ENCODE measurements at regions of chr11 and their contacts with region 1.

Region 1: DNA sequence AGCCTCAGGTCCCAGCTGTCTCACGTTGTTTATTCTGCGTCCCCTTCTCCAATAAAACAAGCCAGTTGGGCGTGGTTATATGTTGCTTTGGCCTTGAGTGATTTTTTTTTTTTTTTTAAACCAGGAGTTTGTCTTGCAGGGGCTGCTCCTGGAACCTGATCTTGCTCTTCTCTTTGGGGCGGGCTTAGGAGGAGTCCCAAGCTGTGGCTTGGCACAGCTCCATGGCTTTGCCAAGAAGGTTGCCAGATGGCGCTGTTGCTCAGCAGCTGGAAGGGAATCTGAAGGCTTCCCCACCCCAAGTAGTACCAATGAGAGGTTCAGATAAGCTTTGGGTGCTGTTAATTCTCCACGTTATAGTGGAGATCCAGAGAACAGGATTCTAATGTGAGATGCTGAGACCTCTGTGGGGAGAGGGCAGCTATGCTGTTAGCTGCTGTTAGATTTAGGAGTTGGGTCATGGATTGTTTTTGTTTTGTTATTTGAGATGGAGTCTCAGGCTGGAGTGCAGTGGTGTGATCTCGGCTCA is 2.0 kb upstream of the FERMT3 start:
- DNase-seq: peak; percentile 98
- ATAC-seq: peak; percentile 73
- H3K4me3 ChIP-seq: no peak overlapping the region
- H3K27ac ChIP-seq: no peak overlapping the region
- H3K4me1 ChIP-seq: 0 out of 2 replicates have a peak, but pooled peaks cover 3% of the 10 kb centered on the region
- H3K27me3 ChIP-seq: no peaks in the 10 kb centered on the region
- CTCF ChIP-seq: peak; percentile 96

Region 2: DNA sequence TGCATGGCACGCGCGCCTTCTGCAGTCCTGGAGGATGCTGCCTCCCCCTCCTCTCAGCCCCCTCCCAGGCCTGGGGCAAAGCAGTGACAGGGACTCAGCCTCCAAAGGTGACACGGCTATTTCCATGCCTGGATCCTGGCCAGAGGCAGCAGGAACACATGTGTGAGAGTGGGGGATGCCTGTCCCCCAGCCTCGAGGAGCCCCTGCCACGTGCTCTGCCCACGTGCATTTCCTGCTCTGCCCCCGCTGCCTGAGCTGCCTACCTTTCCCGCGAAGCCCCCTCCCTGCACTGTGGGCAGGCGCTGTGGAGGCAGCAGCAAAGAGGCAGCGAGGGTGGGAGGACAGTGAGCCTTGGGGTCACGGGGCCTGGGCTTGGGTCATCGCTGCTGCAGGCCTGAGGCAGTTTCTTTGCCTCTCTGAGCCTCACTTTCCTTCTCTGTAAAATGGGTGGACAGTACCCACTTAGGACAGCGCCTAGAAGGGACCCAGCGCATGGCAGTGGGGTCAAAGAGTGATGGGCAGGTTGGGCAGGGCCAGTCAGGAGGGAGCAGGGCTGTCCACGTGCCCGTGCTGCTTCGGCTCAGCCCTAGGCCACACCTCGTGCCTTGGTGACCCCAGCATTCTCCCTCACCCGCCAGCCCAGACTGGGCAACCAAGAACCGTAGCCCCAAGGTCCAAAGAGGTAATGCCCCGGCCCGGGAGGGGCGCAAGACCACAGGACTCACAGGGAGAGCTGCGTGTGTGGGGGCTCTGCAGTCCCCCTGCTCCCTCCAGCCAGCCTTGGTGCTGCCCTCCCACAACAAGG is 120.2 kb before region 1 on chr11:
- CTCF ChIA-PET with region 1: no interaction called
- POLR2A ChIA-PET with region 1: interaction called, 10 read pairs
- intact Hi-C with region 1: no loop called
- DNase-seq: no peak
- ATAC-seq: no peak
- H3K4me3 ChIP-seq: no peak overlapping the region
- H3K27ac ChIP-seq: no peak overlapping the region
- H3K4me1 ChIP-seq: no peaks in the 10 kb centered on the region
- H3K27me3 ChIP-seq: no peaks in the 10 kb centered on the region
- CTCF ChIP-seq: no peak

Region 3: GRCh38 chr11:64170419-64170818 is 34.1 kb before region 1 on chr11:
- CTCF ChIA-PET with region 1: no interaction called
- POLR2A ChIA-PET with region 1: no interaction called
- intact Hi-C with region 1: no loop called
- DNase-seq: no peak
- ATAC-seq: no peak
- H3K4me3 ChIP-seq: no peak overlapping the region
- H3K27ac ChIP-seq: no peak overlapping the region
- H3K4me1 ChIP-seq: 0 out of 2 replicates have a peak, but pooled peaks cover 4% of the 10 kb centered on the region
- H3K27me3 ChIP-seq: no peaks in the 10 kb centered on the region
- CTCF ChIP-seq: no peak

Region 4: DNA sequence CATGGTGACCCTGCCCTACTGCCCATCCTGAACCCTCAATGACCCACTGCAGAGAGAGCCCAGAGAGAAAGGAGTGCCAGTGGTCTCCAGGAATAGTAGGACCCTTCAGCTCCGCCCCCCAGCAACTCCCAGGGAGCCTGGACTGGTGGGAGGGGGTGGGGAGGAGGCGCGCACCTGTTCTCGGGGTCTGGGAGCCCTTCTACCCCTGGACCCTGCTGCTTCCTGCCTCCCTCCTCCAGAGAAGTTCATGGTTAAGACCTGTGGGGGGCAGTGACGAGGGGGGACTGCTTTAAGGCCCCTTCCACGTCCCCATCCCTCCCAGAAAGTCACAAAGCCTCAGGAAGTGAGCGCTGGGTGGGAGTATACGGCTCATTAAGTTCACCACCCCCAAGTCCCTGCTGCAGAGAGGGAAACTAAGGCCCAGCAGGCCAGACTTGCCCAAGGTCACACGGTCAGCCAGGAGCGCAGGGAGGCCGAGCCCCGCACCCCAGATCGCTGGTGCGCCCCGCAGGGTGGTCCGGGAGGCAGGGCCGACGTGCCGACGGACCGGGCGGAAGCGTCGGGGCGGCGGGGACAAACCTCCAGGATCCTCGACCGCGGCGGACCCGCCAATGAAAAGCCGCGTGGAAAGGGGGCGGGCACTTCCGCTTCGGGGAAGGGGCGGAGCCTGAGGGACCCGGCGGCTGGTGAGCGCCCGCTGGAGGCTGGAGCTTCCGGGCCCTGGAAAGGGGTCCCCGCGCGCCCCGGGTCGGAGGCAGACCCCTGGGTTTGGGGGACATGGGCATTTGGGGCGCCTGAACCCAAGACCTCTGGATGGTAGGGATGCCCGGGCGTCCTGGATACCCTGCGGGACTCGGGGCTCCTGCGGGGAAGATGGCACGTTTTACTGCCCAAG is 21.3 kb after region 1 on chr11 and contains the starts of genes NUDT22 and TRPT1:
- CTCF ChIA-PET with region 1: interaction called, 15 read pairs
- POLR2A ChIA-PET with region 1: no interaction called
- intact Hi-C with region 1: loop called (anchors 1 kb)
- DNase-seq: peak; percentile 88
- ATAC-seq: peak; percentile 68
- H3K4me3 ChIP-seq: peak within 1 kb of the TSS; percentile 83
- H3K27ac ChIP-seq: no peak within 1 kb of the TSS
- H3K4me1 ChIP-seq: peaks cover 35% of the 10 kb centered on the region
- H3K27me3 ChIP-seq: no peaks in the 10 kb centered on the region
- CTCF ChIP-seq: peak; percentile 49
- total RNA-seq, gene NUDT22: 98.3 and 102 TPM in 2 replicates
- total RNA-seq, gene TRPT1: 56.0 and 57.7 TPM in 2 replicates

Region 5: DNA sequence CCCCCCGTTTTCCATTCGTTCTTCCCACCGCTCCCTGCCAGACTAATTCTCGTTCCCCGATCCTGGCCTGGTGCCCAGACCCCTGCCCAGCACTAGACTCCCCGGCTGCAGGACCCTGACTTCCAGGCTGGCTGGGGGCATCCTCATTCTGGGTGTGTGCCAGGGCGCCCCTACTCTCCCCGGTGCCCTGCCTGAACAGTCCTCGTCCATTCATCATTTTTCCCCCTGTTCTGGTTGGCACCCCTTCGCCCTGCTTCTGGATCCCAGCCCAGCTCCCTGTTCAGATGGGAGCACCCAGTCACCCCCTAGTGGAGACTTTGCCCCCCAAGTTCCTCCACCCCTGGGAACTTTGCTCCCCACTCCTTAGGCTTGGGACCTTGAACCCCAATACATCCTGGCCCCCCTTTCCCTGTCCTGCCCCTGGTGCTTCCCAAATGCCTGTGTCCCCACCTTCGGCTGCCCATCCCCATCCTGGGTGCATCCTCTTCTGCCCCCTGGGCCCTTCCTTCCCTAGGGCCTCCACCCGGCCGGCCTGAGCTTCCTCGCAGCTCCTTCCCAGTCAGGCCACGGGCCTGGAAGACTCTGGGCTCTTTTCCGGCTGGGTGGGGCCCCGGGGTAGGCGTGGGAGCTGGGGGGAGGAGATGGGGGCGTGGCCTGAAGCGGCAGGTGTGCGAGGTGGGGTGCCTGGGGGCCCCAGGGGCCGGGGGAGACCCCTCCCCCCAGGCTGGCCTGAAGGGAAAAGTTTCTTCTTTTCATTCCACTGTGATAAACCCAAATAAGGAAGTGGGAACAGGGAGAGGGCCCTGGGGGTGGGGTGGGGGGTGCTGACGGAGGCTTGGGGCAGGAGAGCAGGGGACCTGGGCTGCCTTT is 47.7 kb after region 1 on chr11:
- CTCF ChIA-PET with region 1: interaction called, 11 read pairs
- POLR2A ChIA-PET with region 1: no interaction called
- intact Hi-C with region 1: loop called (anchors 1 kb)
- DNase-seq: peak; percentile 77
- ATAC-seq: peak; percentile 45
- H3K4me3 ChIP-seq: peak overlapping the region; percentile 85
- H3K27ac ChIP-seq: no peak overlapping the region
- H3K4me1 ChIP-seq: peaks cover 31% of the 10 kb centered on the region
- H3K27me3 ChIP-seq: no peaks in the 10 kb centered on the region
- CTCF ChIP-seq: peak; percentile 64

Region 6: GRCh38 chr11:64531906-64532312 is 327.4 kb after region 1 on chr11:
- CTCF ChIA-PET with region 1: no interaction called
- POLR2A ChIA-PET with region 1: no interaction called
- intact Hi-C with region 1: no loop called
- DNase-seq: no peak
- ATAC-seq: no peak
- H3K4me3 ChIP-seq: no peak overlapping the region
- H3K27ac ChIP-seq: no peak overlapping the region
- H3K4me1 ChIP-seq: peaks cover 3% of the 10 kb centered on the region; the same call in 1 of the 2 replicates
- H3K27me3 ChIP-seq: peaks cover 75% of the 10 kb centered on the region
- CTCF ChIP-seq: no peak